Mucosa of descending colon (tissue), 3 donors: ENCODE measurements at regions of chr21 and their contacts with region 1.

Region 1: GRCh38 chr21:32569261-32570230 is 15.8 kb downstream of the TCP10L start:
- DNase-seq: peak; percentile 72 to 86 (median 80)
- ATAC-seq: peak; percentile 91
- H3K4me3 ChIP-seq: no peak overlapping the region
- H3K4me1 ChIP-seq: no peaks in the 10 kb centered on the region
- CTCF ChIP-seq: peak; percentile 75

Region 2: GRCh38 chr21:32403201-32403777 is 166.3 kb before region 1 on chr21:
- intact Hi-C with region 1: loop called in 1 of 2 experiments (anchors 10 kb)
- DNase-seq: peak in 1 of 3 donors; percentile 86
- ATAC-seq: peak; percentile 78
- H3K4me3 ChIP-seq: no peak overlapping the region
- H3K4me1 ChIP-seq: no peaks in the 10 kb centered on the region
- CTCF ChIP-seq: no peak

Region 3: DNA sequence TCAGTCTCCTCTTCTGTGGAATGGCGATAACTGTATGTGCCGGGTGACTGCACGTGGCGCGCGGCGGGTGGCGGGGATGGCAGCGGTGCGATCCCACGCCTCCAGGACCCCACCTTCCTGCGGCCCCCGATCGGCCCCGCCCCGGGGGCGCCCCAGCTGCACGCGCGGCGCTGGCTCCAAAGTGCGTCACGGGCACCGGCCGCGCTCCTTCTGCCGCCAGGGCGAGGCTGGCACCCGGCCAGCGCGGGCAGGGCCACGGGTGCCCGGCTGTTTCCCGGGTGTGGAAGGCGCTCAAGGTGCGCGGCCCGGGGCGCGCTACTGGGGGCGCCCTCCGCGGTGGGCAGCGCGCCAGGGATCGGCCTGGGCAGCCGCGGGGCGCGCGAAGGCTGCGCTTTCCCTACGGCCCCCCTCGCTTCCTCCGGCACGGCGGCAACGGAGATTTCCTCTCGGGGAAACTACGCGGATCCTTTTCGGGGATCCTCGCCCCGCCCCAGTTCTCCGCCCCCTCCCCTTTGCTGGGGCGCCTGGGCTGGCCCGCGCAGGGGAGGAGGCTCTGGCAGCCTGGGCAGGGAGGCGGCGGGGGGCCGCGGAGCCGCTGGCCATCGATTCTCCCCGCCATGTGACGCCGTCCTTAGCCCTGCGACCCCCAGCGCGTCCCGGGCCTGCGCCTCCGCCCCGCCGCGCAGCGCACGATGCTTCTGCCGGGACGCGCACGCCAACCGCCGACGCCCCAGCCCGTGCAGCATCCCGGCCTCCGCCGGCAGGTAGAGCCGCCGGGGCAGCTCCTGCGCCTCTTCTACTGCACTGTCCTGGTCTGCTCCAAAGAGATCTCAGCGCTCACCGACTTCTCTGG is 157.2 kb before region 1 on chr21 and contains the start of gene EVA1C:
- intact Hi-C with region 1: loop called (anchors 10 kb)
- DNase-seq: peak; percentile 68 to 86 (median 81)
- ATAC-seq: peak; percentile 75
- H3K4me3 ChIP-seq: peak within 1 kb of the TSS; percentile 23
- H3K4me1 ChIP-seq: peaks cover 21% of the 10 kb centered on the region
- CTCF ChIP-seq: no peak
- total RNA-seq, gene EVA1C: 13.7 to 27.8 (median 15.3) TPM

Region 4: DNA sequence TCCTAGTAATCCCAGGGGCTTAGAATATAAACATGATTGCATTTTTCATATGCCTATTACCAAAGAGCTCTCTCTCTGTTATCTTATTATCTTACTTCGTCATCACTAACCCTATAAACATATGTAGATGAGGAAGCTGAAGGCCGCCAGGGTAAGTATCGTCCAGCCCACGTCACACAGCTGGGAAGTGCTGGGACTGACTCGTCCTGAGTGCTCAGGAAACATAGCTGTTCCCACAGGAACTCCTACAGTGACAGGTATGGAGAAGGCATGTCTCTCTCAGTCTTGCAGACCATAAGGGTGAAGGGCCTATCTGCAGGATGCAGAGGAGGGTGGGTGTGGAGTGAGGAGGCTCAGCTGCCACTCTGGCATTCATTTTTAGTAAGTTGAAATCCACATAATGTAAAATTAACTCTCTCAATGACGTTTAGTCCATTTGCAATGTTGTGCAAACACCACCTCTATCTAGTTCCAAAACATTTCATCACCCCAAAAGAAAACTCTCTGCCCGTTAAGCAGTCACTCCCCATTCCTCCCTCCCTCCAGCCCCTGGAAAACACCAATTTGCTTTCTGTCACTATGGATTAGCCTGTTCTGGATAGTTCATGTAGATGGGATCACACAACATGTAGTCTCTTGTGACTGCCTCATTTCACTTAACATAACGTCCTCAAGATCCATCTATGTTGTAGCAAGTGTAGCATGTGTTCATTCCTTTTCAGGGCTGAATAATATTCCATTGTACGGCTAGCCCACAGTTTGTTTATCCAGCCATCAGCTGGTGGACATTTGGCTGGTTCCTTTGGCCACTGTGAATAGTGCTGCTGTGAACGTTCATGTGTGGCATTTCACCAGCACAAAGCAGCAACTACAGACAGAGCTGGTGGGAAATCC is 52.5 kb before region 1 on chr21:
- intact Hi-C with region 1: no loop called
- DNase-seq: no peak
- ATAC-seq: no peak
- H3K4me3 ChIP-seq: no peak overlapping the region
- H3K4me1 ChIP-seq: no peaks in the 10 kb centered on the region
- CTCF ChIP-seq: no peak